Ascending aorta (tissue), 2 donors: ENCODE measurements at regions of chr16 and their contacts with region 1.

Region 1: DNA sequence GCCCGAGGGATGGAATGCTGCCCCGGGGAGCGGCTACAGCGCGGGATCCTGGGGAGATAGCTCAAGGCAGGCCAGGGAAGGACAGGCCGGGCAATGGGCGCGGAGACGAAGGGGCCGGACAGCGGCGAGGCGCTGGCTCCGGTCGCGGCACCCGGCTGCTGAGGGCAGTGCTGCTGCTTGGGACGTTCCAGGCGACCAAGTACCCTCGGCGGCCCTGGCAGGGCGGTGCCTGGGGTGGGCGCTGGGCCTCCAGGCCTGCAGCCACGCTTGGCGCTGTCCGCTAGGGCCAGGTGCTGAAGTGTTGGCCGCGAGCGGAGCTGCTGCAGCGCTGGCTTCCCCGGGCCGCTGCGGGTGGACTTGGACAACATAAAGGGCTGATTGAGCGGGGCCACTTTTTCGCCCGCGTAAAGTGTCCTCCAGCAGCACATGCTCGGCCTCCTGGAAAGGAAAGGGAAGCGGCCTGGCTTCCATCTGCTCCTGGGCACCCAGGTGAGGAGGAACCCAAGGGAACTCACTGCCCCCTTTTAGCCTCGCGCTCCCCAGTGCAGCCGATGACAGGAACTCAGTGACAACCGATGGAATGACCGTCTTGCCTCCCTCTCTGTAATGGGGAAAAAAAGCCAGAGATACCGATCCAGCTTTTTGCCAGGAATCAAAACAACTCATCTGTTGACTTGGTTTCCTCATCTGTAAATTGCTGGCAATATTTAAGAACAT is 23.7 kb downstream of the CLEC3A start:
- DNase-seq: peak in 1 of 2 donors; percentile 68
- H3K4me3 ChIP-seq: peak overlapping the region in 1 of 2 donors; percentile 27
- H3K27ac ChIP-seq: no peak overlapping the region
- H3K4me1 ChIP-seq: peaks cover 3% of the 10 kb centered on the region in 2 donors
- H3K27me3 ChIP-seq: no peaks in the 10 kb centered on the region
- CTCF ChIP-seq: peak in 1 of 3 experiments; percentile 21

Region 2: DNA sequence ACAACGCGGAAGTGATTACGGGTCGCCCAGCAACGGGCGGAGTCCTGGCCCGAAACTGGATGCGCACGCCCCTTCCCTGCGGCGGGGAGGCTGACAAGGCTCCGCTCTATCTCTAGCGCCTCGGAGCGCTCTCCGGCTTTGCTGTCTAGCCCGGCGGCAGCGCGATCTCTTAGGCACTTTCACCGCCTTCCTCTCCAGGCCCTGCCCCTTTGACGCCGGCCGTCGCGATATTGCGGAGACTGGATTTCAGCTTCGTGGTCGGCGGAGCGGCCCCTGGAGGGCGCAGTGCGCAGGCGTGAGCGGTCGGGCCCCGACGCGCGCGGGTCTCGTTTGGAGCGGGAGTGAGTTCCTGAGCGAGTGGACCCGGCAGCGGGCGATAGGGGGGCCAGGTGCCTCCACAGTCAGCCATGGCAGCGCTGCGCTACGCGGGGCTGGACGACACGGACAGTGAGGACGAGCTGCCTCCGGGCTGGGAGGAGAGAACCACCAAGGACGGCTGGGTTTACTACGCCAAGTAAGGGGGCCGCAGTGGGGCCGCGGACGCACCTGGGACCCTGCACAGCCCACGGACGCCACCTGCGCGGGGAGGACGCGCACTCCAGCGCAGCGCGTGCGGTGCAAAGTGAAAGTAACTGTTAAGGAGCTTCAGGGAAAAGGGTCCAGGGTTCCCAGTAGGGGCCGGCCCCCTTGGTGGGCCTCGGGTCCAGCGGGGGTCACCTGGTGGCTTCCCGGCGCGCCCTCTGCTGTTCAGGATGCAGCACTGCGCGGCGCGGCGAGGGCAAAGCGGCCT is 53.5 kb after region 1 on chr16 and contains the start of gene WWOX:
- intact Hi-C with region 1: loop called (anchors 5 kb)
- DNase-seq: peak; percentile 91 to 99
- H3K4me3 ChIP-seq: peak within 1 kb of the TSS; percentile 67 to 98
- H3K27ac ChIP-seq: peak within 1 kb of the TSS; percentile 88 to 92
- H3K4me1 ChIP-seq: peaks cover 4 to 15% of the 10 kb centered on the region in 2 donors
- H3K27me3 ChIP-seq: no peaks in the 10 kb centered on the region
- CTCF ChIP-seq: peak; percentile 76 to 94 (median 81)
- total RNA-seq, gene WWOX: 106 TPM

Region 3: GRCh38 chr16:78147896-78148535 is 102.0 kb after region 1 on chr16:
- intact Hi-C with region 1: no loop called
- DNase-seq: no peak
- H3K4me3 ChIP-seq: no peak overlapping the region
- H3K27ac ChIP-seq: no peak overlapping the region
- H3K4me1 ChIP-seq: peaks cover 0 to 4% of the 10 kb centered on the region in 2 donors
- H3K27me3 ChIP-seq: no peaks in the 10 kb centered on the region
- CTCF ChIP-seq: no peak